Endothelial cell of umbilical vein (primary cell): ENCODE measurements at regions of chr1 and their contacts with region 1.

Region 1: DNA sequence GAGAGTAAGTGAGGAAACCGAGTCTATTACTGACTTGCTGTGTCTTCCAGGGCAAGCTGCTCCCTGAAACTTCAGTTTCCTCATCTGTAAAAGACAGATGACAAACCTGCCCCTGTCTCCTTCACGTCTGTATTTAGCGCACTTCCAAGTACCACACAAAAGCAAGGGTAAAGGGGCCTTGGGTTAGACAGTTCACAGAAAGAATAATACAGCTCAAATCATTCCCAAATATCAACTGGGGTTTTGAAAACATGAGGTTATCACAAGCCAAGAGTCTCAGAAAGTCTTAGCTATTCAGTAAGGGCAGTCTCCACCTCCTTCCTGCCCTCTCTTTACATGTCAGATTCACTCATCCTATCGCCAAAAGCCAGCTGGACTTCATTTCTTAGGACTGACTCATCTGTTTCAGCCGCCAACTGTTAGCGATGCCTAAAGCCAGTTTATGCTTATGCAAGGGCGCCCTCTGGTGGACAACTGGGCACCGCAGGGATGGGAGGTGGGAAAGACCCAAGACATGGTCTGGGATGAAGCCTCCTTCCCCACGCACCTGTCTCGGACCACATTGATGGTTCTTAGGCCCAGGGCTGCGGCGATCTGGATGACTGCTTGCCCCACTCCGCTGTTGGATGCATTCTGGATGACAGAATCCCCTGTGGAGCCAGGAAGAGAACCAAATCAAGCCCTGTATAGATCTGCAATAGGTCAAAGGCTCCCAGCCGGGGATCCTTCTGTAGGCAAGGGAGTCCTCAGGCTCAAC is 21.1 kb upstream of the SRSF4 start:
- DNase-seq: peak; percentile 96
- H3K4me3 ChIP-seq: no peak overlapping the region
- H3K27ac ChIP-seq: peak overlapping the region; percentile 63
- H3K4me1 ChIP-seq: peaks cover 10% of the 10 kb centered on the region
- H3K27me3 ChIP-seq: no peaks in the 10 kb centered on the region
- CTCF ChIP-seq: peak; percentile 89 to 97
- POLR2A ChIP-seq: no peak

Region 2: GRCh38 chr1:29124366-29125236 is 78.2 kb before region 1 on chr1:
- CTCF ChIA-PET with region 1: interaction called, 11 read pairs
- POLR2A ChIA-PET with region 1: no interaction called
- dilution Hi-C with region 1: no loop called
- intact Hi-C with region 1: loop called (anchors 2 kb)
- DNase-seq: peak; percentile 72
- H3K4me3 ChIP-seq: peak overlapping the region; percentile 33 to 52 (median 42)
- H3K27ac ChIP-seq: peak overlapping the region; percentile 46
- H3K4me1 ChIP-seq: peaks cover 23% of the 10 kb centered on the region
- H3K27me3 ChIP-seq: peaks cover 0 to 14% of the 10 kb centered on the region in 2 experiments
- CTCF ChIP-seq: peak; percentile 55 to 72
- POLR2A ChIP-seq: peak; percentile 26

Region 3: DNA sequence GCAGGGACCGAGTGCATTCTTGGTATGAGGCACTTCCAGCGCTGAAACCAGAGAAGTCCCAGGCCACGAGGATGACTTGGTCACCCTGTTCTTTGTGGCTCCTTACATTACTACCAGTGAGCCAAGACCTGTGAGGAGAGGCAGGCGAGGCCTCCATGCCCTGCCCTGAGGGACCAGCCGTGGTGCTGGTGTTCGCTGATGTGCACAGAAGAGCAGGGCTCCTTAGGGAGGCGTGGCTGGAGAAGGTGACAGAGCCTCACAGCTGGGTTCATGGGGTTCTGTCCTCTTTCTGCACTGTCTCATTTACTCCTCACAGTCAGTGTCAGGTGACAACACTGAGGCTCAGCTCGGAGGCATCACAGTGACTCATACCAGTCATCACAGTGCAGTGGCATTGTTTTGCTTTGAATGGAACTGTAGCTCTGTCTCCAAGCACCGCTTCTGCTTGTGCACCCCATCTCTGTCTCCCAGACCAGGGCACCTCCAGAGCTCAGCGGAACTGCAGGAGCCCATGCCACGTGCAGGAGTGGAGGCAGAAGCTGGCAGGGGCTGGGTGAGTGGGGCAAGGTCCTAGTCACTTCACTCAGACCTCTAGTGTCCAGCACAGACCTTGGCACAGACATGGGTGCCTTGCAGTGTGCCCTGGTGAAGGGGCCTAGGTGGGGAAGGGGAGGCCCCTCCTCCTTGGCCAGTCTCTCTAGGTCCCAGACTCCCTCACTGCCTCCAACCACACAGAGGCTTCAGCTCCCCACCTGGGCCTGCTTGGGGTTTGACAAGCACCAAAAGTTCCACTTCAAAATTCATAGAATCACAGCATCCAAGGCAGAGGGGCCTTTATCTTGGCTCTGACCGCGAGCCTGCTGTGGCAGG is 1209.7 kb after region 1 on chr1:
- CTCF ChIA-PET with region 1: no interaction called
- POLR2A ChIA-PET with region 1: no interaction called
- dilution Hi-C with region 1: no loop called
- intact Hi-C with region 1: no loop called
- DNase-seq: no peak
- H3K4me3 ChIP-seq: no peak overlapping the region
- H3K27ac ChIP-seq: no peak overlapping the region
- H3K4me1 ChIP-seq: no peaks in the 10 kb centered on the region
- H3K27me3 ChIP-seq: no peaks in the 10 kb centered on the region
- CTCF ChIP-seq: no peak
- POLR2A ChIP-seq: no peak